HepG2 (cell line): ENCODE measurements at regions of chrX and their contacts with region 1.

Region 1: DNA sequence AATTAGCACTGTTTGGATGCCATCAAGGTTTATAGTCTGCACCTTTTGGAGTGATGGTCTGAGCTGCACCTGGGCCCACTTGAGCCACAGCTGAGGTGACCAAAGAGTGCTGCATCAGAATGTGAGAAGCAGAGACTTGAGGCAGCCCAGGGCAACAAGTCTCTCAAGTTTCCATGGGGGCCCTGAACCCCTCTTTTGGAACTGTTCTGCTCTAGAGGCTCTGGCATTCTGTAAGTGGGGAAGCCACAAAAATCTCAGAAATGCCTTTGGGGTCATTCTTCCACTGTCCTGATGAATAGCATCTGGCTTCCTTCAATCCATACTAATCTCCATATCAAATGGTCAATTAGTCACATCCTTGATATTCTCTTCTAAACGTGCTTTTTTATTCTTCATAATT is 298.4 kb upstream of the MAOA start:
- DNase-seq: no peak
- ATAC-seq: no peak
- H3K4me3 ChIP-seq: no peak overlapping the region
- H3K27ac ChIP-seq: no peak overlapping the region
- H3K4me1 ChIP-seq: no peaks in the 10 kb centered on the region
- H3K27me3 ChIP-seq: no peaks in the 10 kb centered on the region
- CTCF ChIP-seq: no peak
- EP300 ChIP-seq: no peak
- POLR2A ChIP-seq: no peak
- RAD21 ChIP-seq: no peak

Region 2: DNA sequence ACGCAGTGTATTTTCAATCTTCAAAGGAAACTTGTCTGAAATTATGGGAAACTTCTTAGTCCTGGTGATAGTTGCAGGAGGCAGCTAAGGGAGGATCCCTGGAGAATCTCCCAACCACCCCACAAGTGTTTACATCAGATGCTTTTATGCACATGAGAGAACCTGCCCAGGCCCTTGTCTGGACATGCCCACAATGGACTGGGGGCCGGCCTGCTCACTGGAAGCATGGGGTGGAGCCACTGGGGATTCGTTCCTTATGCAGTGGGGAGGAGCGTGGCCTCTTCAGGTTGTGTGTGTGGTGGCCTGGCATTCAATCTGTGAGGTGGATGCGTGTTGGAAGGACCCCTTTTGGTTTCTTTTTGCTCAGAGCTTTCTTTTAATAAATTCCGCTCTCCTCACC is 181.1 kb before region 1 on chrX:
- CTCF ChIA-PET with region 1: no interaction called
- POLR2A ChIA-PET with region 1: no interaction called
- in situ Hi-C with region 1: no loop called
- intact Hi-C with region 1: no loop called
- DNase-seq: peak; percentile 0
- ATAC-seq: no peak
- H3K4me3 ChIP-seq: no peak overlapping the region
- H3K27ac ChIP-seq: no peak overlapping the region
- H3K4me1 ChIP-seq: no peaks in the 10 kb centered on the region
- H3K27me3 ChIP-seq: no peaks in the 10 kb centered on the region
- CTCF ChIP-seq: no peak
- EP300 ChIP-seq: no peak
- POLR2A ChIP-seq: no peak
- RAD21 ChIP-seq: no peak

Region 3: DNA sequence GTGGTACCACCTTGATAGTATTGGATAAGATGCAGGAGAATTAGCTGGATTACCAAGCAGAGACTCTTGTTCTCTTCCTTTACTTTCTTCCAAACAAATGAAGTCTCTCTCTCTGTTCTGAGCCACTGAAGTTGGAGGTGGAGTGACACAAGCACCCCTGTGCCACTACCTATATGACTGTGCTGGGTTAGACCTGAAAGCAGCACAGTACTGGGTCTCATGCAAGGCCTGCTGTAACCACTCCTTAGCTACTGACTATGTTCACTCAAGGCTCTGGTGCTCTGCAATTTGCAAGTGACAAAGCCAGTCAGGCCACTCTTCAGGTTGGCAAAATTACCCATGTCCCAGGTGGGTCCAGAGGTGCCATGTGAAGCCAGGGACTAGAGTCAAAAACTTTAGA is 91.3 kb before region 1 on chrX:
- CTCF ChIA-PET with region 1: no interaction called
- POLR2A ChIA-PET with region 1: no interaction called
- in situ Hi-C with region 1: no loop called
- intact Hi-C with region 1: no loop called
- DNase-seq: no peak
- ATAC-seq: no peak
- H3K4me3 ChIP-seq: no peak overlapping the region
- H3K27ac ChIP-seq: no peak overlapping the region
- H3K4me1 ChIP-seq: no peaks in the 10 kb centered on the region
- H3K27me3 ChIP-seq: no peaks in the 10 kb centered on the region
- CTCF ChIP-seq: no peak
- EP300 ChIP-seq: no peak
- POLR2A ChIP-seq: no peak
- RAD21 ChIP-seq: no peak

Region 4: GRCh38 chrX:43423876-43424275 is 66.1 kb after region 1 on chrX:
- CTCF ChIA-PET with region 1: no interaction called
- POLR2A ChIA-PET with region 1: no interaction called
- in situ Hi-C with region 1: no loop called
- intact Hi-C with region 1: no loop called
- DNase-seq: no peak
- ATAC-seq: no peak
- H3K4me3 ChIP-seq: no peak overlapping the region
- H3K27ac ChIP-seq: no peak overlapping the region
- H3K4me1 ChIP-seq: no peaks in the 10 kb centered on the region
- H3K27me3 ChIP-seq: no peaks in the 10 kb centered on the region
- CTCF ChIP-seq: no peak
- EP300 ChIP-seq: no peak
- POLR2A ChIP-seq: no peak
- RAD21 ChIP-seq: no peak

Region 5: GRCh38 chrX:43525901-43526610 is 168.3 kb after region 1 on chrX:
- CTCF ChIA-PET with region 1: no interaction called
- POLR2A ChIA-PET with region 1: no interaction called
- in situ Hi-C with region 1: loop called (anchors 25 kb)
- intact Hi-C with region 1: no loop called
- DNase-seq: no peak
- ATAC-seq: no peak
- H3K4me3 ChIP-seq: no peak overlapping the region
- H3K27ac ChIP-seq: no peak overlapping the region
- H3K4me1 ChIP-seq: no peaks in the 10 kb centered on the region
- H3K27me3 ChIP-seq: no peaks in the 10 kb centered on the region
- CTCF ChIP-seq: no peak
- EP300 ChIP-seq: no peak
- POLR2A ChIP-seq: no peak
- RAD21 ChIP-seq: no peak

Region 6: GRCh38 chrX:43750248-43750676 is 392.5 kb after region 1 on chrX:
- CTCF ChIA-PET with region 1: no interaction called
- POLR2A ChIA-PET with region 1: no interaction called
- in situ Hi-C with region 1: loop called (anchors 10 kb)
- intact Hi-C with region 1: no loop called
- DNase-seq: peak; percentile 57
- ATAC-seq: peak; percentile 88
- H3K4me3 ChIP-seq: no peak overlapping the region
- H3K27ac ChIP-seq: no peak overlapping the region
- H3K4me1 ChIP-seq: 0 out of 2 replicates have a peak, but pooled peaks cover 9% of the 10 kb centered on the region
- H3K27me3 ChIP-seq: no peaks in the 10 kb centered on the region
- CTCF ChIP-seq: peak; percentile 77
- EP300 ChIP-seq: no peak
- POLR2A ChIP-seq: no peak
- RAD21 ChIP-seq: peak; percentile 79

Region 7: DNA sequence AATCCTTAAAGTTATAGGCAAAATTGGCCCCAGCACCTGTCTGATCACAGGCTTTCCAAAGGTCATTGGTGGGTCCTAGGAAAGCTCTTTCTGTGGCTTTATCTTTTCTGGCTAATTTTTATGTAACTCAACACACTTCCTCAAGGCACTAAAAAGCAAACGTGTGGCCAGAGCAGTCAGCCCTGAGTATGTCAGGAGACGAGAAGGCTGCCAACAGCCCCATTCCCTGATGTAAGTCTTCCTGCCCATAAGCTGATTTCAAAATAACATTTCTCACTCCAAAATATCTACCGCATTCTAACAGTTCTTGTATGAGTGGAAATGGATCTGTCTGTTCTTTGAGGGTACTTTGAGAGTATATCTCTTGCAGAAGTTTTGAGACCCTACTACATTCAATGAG is 1210.5 kb after region 1 on chrX:
- CTCF ChIA-PET with region 1: no interaction called
- POLR2A ChIA-PET with region 1: no interaction called
- in situ Hi-C with region 1: no loop called
- intact Hi-C with region 1: no loop called
- DNase-seq: no peak
- ATAC-seq: no peak
- H3K4me3 ChIP-seq: no peak overlapping the region
- H3K27ac ChIP-seq: no peak overlapping the region
- H3K4me1 ChIP-seq: no peaks in the 10 kb centered on the region
- H3K27me3 ChIP-seq: no peaks in the 10 kb centered on the region
- CTCF ChIP-seq: no peak
- EP300 ChIP-seq: no peak
- POLR2A ChIP-seq: no peak
- RAD21 ChIP-seq: no peak